GM12878 (cell line): ENCODE measurements at regions of chr12 and their contacts with region 1.

Region 1: GRCh38 chr12:55926738-55927587 is 731 bp downstream of the PYM1 start:
- DNase-seq: peak; percentile 81
- ATAC-seq: peak; percentile 65
- H3K4me3 ChIP-seq: peak overlapping the region; percentile 93
- H3K27ac ChIP-seq: peak overlapping the region; percentile 96
- H3K4me1 ChIP-seq: peaks cover 3% of the 10 kb centered on the region; the same call in 1 of the 2 replicates
- H3K27me3 ChIP-seq: no peaks in the 10 kb centered on the region
- CTCF ChIP-seq: peak; percentile 73 to 79 (median 73)
- EP300 ChIP-seq: peak; percentile 25 to 45; a peak in 1 of 4 replicates
- POLR2A ChIP-seq: peak; percentile 80
- RAD21 ChIP-seq: peak; percentile 38

Region 2: DNA sequence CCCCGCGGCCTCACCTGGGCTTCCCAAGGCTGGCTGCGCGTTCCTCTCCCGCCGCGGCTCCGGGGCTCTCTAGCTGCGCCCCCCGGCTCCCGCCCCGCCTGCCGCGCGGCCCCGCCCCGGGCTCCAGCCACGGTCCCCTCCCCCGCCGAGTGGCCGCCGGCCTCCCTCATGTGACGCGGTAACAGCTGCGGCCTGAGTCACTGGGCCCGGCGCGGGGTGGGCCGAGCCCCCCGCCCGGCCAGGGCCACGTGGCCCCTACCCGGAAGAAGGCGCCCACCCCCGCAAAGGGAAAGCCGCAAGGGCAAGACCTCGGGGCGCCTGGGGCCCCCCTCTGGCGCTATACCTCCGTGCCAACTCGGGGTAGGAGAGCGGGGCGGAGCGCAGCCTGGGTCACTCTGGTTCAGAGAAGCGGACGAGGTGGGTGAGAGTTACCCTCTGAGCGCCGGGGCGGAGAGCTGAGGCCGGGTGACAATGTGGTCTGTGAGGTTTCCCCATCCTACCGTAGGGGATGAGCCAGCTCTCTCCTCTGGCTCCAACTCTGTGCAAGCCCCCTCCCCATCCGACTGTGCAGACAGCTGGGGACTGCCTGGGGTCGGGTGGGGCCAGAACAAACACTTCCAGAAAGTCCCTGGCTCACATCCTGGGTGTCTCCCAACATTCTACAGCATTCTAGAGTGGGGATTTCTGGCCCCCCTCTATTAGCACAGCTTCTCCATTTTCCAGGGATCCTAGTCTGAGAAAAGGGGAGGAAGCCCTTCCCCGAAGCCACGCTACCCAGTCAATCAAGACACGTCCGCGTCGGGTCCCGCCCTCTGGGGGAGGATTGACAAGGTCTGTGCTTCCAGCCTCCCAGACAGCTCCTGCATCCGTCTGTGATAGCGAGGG is 197.8 kb before region 1 on chr12 and contains the start of gene CD63:
- CTCF ChIA-PET with region 1: interaction called, 7 read pairs
- POLR2A ChIA-PET with region 1: interaction called, 22 read pairs
- RAD21 ChIA-PET with region 1: interaction called, 3 read pairs
- SMC1A ChIA-PET with region 1: no interaction called
- in situ Hi-C with region 1: no loop called
- intact Hi-C with region 1: no loop called
- DNase-seq: no peak
- ATAC-seq: peak; percentile 79
- H3K4me3 ChIP-seq: peak within 1 kb of the TSS; percentile 76
- H3K27ac ChIP-seq: peak within 1 kb of the TSS; percentile 68
- H3K4me1 ChIP-seq: peaks cover 11% of the 10 kb centered on the region
- H3K27me3 ChIP-seq: no peaks in the 10 kb centered on the region
- CTCF ChIP-seq: no peak; a peak in 1 of 6 replicates
- EP300 ChIP-seq: peak in 1 of 2 experiments; percentile 46; a peak in 1 of 4 replicates
- POLR2A ChIP-seq: peak; percentile 77
- RAD21 ChIP-seq: no peak
- polyA plus RNA-seq, gene CD63: 194 to 220 TPM

Region 3: DNA sequence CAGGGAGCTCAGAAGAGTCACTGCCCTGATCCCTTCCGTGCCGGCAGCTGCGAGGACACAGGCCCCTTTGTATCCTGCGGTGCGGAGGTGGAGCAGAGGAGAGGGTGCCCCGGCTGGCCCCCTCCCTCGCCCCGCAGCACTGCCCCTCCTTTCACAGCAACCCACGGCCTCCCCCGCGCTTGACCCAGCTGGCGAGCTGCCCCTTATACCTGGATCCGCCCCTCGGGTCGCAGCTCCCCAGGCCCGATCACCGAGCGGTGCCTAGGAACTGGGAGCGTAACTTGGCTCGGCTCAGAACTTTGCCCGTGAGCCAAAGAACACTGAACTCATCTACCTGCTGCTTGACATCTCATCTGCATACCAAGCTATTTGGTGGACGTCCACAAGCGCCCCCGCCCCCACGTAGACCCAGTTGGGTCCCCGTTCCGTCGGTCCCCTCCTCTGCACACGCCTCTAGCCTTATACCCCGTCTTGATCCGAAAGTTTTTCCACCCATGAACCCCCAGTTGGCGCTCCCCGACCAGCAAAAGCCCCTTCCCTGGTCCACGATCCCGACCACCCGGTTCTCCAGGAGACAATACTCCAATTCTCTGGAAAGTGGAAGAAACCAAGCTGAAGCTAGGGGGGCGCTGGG is 96.9 kb before region 1 on chr12:
- CTCF ChIA-PET with region 1: interaction called, 40 read pairs
- POLR2A ChIA-PET with region 1: interaction called, 44 read pairs
- RAD21 ChIA-PET with region 1: interaction called, 26 read pairs
- SMC1A ChIA-PET with region 1: interaction called, 34 read pairs
- in situ Hi-C with region 1: loop called (anchors 5 kb)
- intact Hi-C with region 1: loop called (anchors 1 kb)
- DNase-seq: no peak
- ATAC-seq: peak; percentile 25
- H3K4me3 ChIP-seq: peak overlapping the region; percentile 96
- H3K27ac ChIP-seq: peak overlapping the region; percentile 76
- H3K4me1 ChIP-seq: peaks cover 21% of the 10 kb centered on the region; the same call in 1 of the 2 replicates
- H3K27me3 ChIP-seq: no peaks in the 10 kb centered on the region
- CTCF ChIP-seq: no peak
- EP300 ChIP-seq: no peak
- POLR2A ChIP-seq: 0 out of 2 replicates have a peak, but pooled peaks have one; percentile 20
- RAD21 ChIP-seq: 0 out of 2 replicates have a peak, but pooled peaks have one; percentile 13

Region 4: DNA sequence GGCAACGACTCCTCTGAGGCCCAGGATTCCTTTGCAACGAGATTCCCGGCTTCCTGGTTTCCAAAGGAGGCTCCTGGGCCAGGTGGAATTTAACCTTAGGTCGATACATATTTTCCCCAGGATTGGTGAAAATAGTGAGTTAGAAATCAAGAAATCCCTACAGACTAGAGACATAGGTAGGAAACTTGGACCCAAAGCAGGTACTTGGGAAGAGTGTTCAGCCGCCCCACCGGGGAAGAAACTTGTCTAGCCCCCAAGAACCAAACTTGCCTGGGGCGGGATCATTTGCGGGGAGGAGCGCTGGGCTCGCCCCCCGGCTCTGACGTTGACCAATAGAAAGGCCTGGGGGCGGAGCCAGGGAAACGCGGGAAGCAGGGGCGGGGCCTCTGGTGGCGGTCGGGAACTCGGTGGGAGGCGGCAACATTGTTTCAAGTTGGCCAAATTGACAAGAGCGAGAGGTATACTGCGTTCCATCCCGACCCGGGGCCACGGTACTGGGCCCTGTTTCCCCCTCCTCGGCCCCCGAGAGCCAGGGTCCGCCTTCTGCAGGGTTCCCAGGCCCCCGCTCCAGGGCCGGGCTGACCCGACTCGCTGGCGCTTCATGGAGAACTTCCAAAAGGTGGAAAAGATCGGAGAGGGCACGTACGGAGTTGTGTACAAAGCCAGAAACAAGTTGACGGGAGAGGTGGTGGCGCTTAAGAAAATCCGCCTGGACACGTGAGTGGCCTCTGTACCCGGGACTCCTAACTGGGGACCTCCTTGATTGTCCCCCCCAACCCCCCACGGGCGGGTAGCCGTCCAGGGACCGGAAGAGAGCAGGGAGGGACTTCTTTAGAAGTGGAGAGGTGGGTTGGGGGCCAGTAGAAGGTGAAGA is 39.7 kb after region 1 on chr12 and contains the start of gene CDK2:
- CTCF ChIA-PET with region 1: interaction called, 16 read pairs
- POLR2A ChIA-PET with region 1: interaction called, 14 read pairs
- RAD21 ChIA-PET with region 1: interaction called, 4 read pairs
- SMC1A ChIA-PET with region 1: interaction called, 4 read pairs
- in situ Hi-C with region 1: no loop called
- intact Hi-C with region 1: no loop called
- DNase-seq: peak; percentile 40
- ATAC-seq: peak; percentile 91
- H3K4me3 ChIP-seq: peak within 1 kb of the TSS; percentile 96
- H3K27ac ChIP-seq: peak within 1 kb of the TSS; percentile 79
- H3K4me1 ChIP-seq: peaks cover 15% of the 10 kb centered on the region
- H3K27me3 ChIP-seq: no peaks in the 10 kb centered on the region
- CTCF ChIP-seq: no peak
- EP300 ChIP-seq: no peak
- POLR2A ChIP-seq: peak; percentile 81
- RAD21 ChIP-seq: no peak
- polyA plus RNA-seq, gene CDK2: 13.1 to 16.1 TPM

Region 5: DNA sequence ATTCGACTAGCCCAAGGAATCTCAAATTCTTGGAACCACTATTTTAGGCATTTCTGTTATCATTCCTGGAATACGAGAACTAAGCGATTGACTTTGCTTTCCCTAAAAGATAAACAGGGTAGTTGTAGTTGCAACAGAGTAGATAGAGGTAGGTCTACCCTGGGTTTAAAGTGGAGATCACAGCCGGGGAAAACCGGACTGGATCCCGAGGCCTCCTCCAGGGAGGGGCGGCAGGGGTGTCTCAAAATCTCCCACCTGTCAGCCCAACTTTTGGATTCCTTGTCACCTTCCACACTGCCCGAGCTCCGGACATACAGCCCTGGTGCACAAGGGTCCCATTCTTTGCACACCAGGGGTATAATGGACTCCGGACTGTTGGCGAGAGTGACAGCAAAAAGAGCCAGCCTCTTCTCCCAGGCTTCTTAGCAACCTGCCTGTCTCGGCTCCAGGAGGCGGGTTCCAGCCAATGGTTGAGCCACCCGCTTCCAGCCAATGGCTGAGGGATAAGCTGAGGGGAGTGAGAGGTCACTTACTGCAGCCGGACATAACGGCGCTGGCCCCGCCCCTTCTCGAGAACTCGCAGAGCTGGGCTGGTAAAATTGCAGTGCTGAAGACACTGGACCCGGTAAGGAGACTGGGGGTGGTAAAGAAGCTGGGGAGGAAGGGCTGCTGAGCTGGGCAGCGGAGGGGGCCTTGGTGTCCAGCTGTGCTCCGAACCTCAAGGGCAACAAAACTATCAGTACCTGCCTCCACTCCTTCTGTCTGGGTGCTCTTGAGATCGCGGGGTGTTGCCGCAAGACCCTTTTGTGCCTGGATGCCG is 70.0 kb after region 1 on chr12 and contains the start of gene SUOX:
- CTCF ChIA-PET with region 1: interaction called, 16 read pairs
- POLR2A ChIA-PET with region 1: interaction called, 8 read pairs
- RAD21 ChIA-PET with region 1: interaction called, 10 read pairs
- SMC1A ChIA-PET with region 1: interaction called, 5 read pairs
- in situ Hi-C with region 1: no loop called
- intact Hi-C with region 1: no loop called
- DNase-seq: peak; percentile 83
- ATAC-seq: peak; percentile 100
- H3K4me3 ChIP-seq: peak within 1 kb of the TSS; percentile 74
- H3K27ac ChIP-seq: peak within 1 kb of the TSS; percentile 33; the same call in 1 of the 2 replicates
- H3K4me1 ChIP-seq: peaks cover 3% of the 10 kb centered on the region; the same call in 1 of the 2 replicates
- H3K27me3 ChIP-seq: no peaks in the 10 kb centered on the region
- CTCF ChIP-seq: no peak
- EP300 ChIP-seq: no peak
- POLR2A ChIP-seq: peak; percentile 72
- RAD21 ChIP-seq: no peak
- polyA plus RNA-seq, gene SUOX: 5.1 to 5.2 TPM

Region 6: DNA sequence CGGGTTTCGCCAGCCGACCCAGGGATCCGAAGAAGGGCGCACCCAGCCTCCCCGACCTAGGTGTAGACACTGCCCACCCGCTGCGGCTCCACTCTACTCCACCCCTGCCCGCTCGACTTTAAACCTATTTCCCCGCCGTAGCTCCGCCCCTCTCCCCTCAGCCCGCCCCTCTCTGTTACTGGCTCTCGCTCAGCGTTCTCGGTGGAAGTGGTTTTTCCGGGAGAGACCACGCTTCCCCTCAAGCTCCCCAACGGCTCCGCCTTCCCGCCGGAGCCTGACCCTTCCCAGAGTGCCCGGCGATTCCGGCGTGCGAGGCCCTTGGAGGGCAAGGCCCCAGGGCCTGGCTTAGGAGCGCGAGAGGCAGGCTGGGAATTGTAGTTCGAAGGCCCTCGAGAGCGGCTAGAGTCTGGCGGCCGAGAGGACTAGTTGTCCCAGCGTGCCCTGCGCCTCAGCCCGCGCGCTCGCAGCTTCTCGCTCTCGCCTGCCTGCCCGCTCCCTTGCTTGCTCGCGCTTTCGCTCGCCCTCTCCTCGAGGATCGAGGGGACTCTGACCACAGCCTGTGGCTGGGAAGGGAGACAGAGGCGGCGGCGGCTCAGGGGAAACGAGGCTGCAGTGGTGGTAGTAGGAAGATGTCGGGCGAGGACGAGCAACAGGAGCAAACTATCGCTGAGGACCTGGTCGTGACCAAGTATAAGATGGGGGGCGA is 177.3 kb after region 1 on chr12 and contains the start of gene PA2G4:
- CTCF ChIA-PET with region 1: interaction called, 5 read pairs
- POLR2A ChIA-PET with region 1: no interaction called
- RAD21 ChIA-PET with region 1: interaction called, 3 read pairs
- SMC1A ChIA-PET with region 1: interaction called, 3 read pairs
- in situ Hi-C with region 1: no loop called
- intact Hi-C with region 1: loop called (anchors 2 kb)
- DNase-seq: peak; percentile 97
- ATAC-seq: peak; percentile 97
- H3K4me3 ChIP-seq: peak within 1 kb of the TSS; percentile 97
- H3K27ac ChIP-seq: peak within 1 kb of the TSS; percentile 86
- H3K4me1 ChIP-seq: peaks cover 3% of the 10 kb centered on the region; the same call in 1 of the 2 replicates
- H3K27me3 ChIP-seq: no peaks in the 10 kb centered on the region; a peak in 1 of 4 replicates
- CTCF ChIP-seq: no peak
- EP300 ChIP-seq: peak in 1 of 2 experiments; percentile 47; a peak in 2 of 4 replicates
- POLR2A ChIP-seq: peak; percentile 93
- RAD21 ChIP-seq: no peak
- polyA plus RNA-seq, gene PA2G4: 148 to 215 TPM